Psoas muscle (tissue), 8 donors: ENCODE measurements at regions of chr20 and their contacts with region 1.

Region 1: GRCh38 chr20:6231551-6231950 is 108.7 kb upstream of the FERMT1 start:
- DNase-seq: no peak
- ATAC-seq: no peak
- H3K4me3 ChIP-seq: no peak overlapping the region
- H3K27ac ChIP-seq: no peak overlapping the region
- H3K4me1 ChIP-seq: no peaks in the 10 kb centered on the region
- H3K27me3 ChIP-seq: no peaks in the 10 kb centered on the region
- CTCF ChIP-seq: no peak

Region 2: DNA sequence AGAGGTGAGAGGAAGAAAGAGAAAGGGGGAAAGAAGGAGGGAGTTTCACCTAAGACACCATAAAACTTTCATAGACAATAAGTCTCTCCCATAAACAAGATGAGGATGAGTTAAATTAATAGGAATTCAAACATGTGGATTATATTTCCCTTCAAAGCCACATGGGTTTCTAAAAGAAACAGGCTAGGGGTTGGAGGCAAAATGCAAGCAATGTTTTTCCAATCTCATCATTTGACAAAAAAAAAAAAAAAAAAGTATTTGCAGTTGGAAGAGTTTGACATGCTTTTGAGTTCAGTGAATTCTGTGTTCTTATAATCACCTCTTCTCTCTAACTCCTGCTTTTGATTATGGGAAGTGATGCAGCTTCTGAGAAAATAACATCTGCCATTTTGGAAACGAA is 1796.3 kb before region 1 on chr20:
- intact Hi-C with region 1: loop called in 1 of 2 experiments (anchors 10 kb)
- DNase-seq: no peak
- ATAC-seq: no peak
- H3K4me3 ChIP-seq: no peak overlapping the region
- H3K27ac ChIP-seq: no peak overlapping the region
- H3K4me1 ChIP-seq: no peaks in the 10 kb centered on the region
- H3K27me3 ChIP-seq: peaks cover 0 to 2% (median under 1%) of the 10 kb centered on the region in 3 donors
- CTCF ChIP-seq: no peak

Region 3: GRCh38 chr20:7682916-7683315 is 1451.4 kb after region 1 on chr20:
- intact Hi-C with region 1: no loop called
- DNase-seq: no peak
- ATAC-seq: no peak
- H3K4me3 ChIP-seq: no peak overlapping the region
- H3K27ac ChIP-seq: no peak overlapping the region
- H3K4me1 ChIP-seq: no peaks in the 10 kb centered on the region
- H3K27me3 ChIP-seq: no peaks in the 10 kb centered on the region
- CTCF ChIP-seq: no peak